Mammary epithelial cell (primary cell): ENCODE measurements at regions of chr6 and their contacts with region 1.

Region 1: DNA sequence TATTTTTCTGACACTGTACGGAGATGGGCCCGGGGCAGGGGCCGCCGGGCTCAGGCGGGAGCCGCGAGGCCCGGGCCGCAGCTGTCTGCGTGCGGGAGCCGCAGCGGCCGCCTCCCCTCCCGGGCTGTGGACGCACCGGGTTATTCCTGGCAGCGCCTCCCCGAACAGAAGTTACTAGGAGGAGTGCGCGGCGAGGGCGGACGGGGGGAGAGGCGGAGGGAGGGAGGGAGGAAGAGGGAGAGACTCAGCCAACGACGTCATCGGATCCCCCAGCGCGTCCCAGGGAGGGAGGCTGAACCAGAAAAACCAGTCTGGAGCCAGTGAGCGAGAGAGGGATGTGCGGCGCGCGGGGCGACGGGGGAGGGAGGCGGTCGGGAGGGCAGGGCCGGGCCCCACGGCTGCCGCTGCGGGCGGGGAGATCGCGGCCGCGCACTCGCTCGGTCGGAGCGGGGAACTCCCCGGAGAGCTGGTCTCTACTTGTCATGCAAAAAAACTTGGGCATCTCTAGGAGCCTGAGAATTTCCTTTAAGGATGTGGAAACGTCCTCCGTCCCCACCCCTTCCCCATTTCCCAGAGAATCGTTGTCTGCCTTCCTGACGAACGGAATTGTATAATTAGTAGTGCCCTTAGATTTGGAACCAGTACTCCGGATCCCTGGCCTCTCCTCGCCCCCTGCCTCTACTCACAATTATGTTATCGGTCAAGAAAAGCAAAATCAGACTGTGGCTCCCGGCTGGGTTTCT is 1.4 kb upstream of the HIVEP2 start:
- DNase-seq: peak; percentile 99
- H3K4me3 ChIP-seq: peak overlapping the region; percentile 79 to 91 (median 86)
- H3K27ac ChIP-seq: peak overlapping the region; percentile 98
- H3K4me1 ChIP-seq: peaks cover 10% of the 10 kb centered on the region
- H3K27me3 ChIP-seq: no peaks in the 10 kb centered on the region
- CTCF ChIP-seq: no peak

Region 2: GRCh38 chr6:142474531-142475289 is 471.6 kb before region 1 on chr6:
- CTCF ChIA-PET with region 1: no interaction called
- dilution Hi-C with region 1: no loop called
- in situ Hi-C with region 1: no loop called
- intact Hi-C with region 1: loop called (anchors 10 kb)
- DNase-seq: peak; percentile 68
- H3K4me3 ChIP-seq: peak overlapping the region in 1 of 3 experiments; percentile 32
- H3K27ac ChIP-seq: no peak overlapping the region
- H3K4me1 ChIP-seq: peaks cover 3% of the 10 kb centered on the region
- H3K27me3 ChIP-seq: no peaks in the 10 kb centered on the region
- CTCF ChIP-seq: peak; percentile 63 to 65

Region 3: GRCh38 chr6:142746524-142746923 is 199.8 kb before region 1 on chr6:
- CTCF ChIA-PET with region 1: no interaction called
- dilution Hi-C with region 1: no loop called
- in situ Hi-C with region 1: no loop called
- intact Hi-C with region 1: loop called (anchors 5 kb)
- DNase-seq: no peak
- H3K4me3 ChIP-seq: no peak overlapping the region
- H3K27ac ChIP-seq: no peak overlapping the region
- H3K4me1 ChIP-seq: no peaks in the 10 kb centered on the region
- H3K27me3 ChIP-seq: no peaks in the 10 kb centered on the region
- CTCF ChIP-seq: peak; percentile 24 to 25

Region 4: GRCh38 chr6:142773859-142774648 is 172.3 kb before region 1 on chr6:
- CTCF ChIA-PET with region 1: no interaction called
- dilution Hi-C with region 1: no loop called
- in situ Hi-C with region 1: no loop called
- intact Hi-C with region 1: no loop called
- DNase-seq: no peak
- H3K4me3 ChIP-seq: no peak overlapping the region
- H3K27ac ChIP-seq: no peak overlapping the region
- H3K4me1 ChIP-seq: no peaks in the 10 kb centered on the region
- H3K27me3 ChIP-seq: no peaks in the 10 kb centered on the region
- CTCF ChIP-seq: no peak

Region 5: DNA sequence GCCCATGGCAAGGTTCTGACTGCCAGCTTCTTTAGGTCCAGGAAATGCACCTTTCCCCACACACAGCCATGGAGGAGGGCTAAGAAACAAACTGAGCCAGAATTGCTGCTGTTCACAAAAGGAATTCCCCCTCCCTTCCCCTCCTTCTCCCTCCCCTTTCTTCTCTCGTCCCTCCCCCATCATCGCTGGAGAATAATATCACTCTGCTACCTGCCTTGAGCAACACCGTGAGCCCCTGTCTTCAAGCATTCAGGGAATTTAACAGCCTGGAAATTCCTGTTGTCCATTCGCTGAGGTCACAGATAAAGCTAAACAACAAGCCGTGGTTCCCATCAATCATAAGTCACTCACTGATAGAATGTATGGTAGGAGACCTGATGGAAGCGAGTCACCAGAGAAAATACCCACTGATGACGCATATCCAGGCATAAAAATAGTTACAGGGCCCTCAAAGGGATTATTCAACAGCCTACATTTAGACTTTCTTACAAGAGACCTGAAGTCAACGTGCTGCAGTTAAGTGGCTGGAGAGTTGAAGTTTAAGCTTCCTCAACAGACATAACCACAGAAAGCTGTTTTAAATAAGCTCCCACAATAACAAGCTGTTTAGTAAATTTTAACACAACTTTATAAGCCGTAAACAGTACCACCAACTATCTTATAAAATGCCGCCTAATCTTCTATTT is 61.0 kb before region 1 on chr6:
- CTCF ChIA-PET with region 1: no interaction called
- dilution Hi-C with region 1: no loop called
- in situ Hi-C with region 1: no loop called
- intact Hi-C with region 1: loop called (anchors 1 kb)
- DNase-seq: peak; percentile 99
- H3K4me3 ChIP-seq: peak overlapping the region; percentile 7 to 37 (median 29)
- H3K27ac ChIP-seq: peak overlapping the region; percentile 86
- H3K4me1 ChIP-seq: peaks cover 25% of the 10 kb centered on the region
- H3K27me3 ChIP-seq: no peaks in the 10 kb centered on the region
- CTCF ChIP-seq: no peak

Region 6: GRCh38 chr6:142896732-142897131 is 49.6 kb before region 1 on chr6:
- CTCF ChIA-PET with region 1: no interaction called
- dilution Hi-C with region 1: no loop called
- in situ Hi-C with region 1: no loop called
- intact Hi-C with region 1: no loop called
- DNase-seq: no peak
- H3K4me3 ChIP-seq: no peak overlapping the region
- H3K27ac ChIP-seq: no peak overlapping the region
- H3K4me1 ChIP-seq: peaks cover 15% of the 10 kb centered on the region
- H3K27me3 ChIP-seq: no peaks in the 10 kb centered on the region
- CTCF ChIP-seq: no peak

Region 7: GRCh38 chr6:143026696-143027449 is 80.5 kb after region 1 on chr6:
- CTCF ChIA-PET with region 1: no interaction called
- dilution Hi-C with region 1: no loop called
- in situ Hi-C with region 1: no loop called
- intact Hi-C with region 1: loop called (anchors 5 kb)
- DNase-seq: no peak
- H3K4me3 ChIP-seq: no peak overlapping the region
- H3K27ac ChIP-seq: no peak overlapping the region
- H3K4me1 ChIP-seq: no peaks in the 10 kb centered on the region
- H3K27me3 ChIP-seq: no peaks in the 10 kb centered on the region
- CTCF ChIP-seq: peak; percentile 46 to 55

Region 8: GRCh38 chr6:143225929-143226328 is 279.6 kb after region 1 on chr6:
- CTCF ChIA-PET with region 1: no interaction called
- dilution Hi-C with region 1: no loop called
- in situ Hi-C with region 1: no loop called
- intact Hi-C with region 1: loop called (anchors 1 kb)
- DNase-seq: peak; percentile 91
- H3K4me3 ChIP-seq: no peak overlapping the region
- H3K27ac ChIP-seq: peak overlapping the region; percentile 93
- H3K4me1 ChIP-seq: peaks cover 28% of the 10 kb centered on the region
- H3K27me3 ChIP-seq: no peaks in the 10 kb centered on the region
- CTCF ChIP-seq: no peak